ENCODE measurements at regions of chr2 and their contacts with region 1.

Region 1: GRCh38 chr2:222939208-222939856 is 78.5 kb downstream of the ACSL3 start:
- DNase-seq: peak; percentile 86 to 91
- H3K4me3 ChIP-seq: no peak overlapping the region
- H3K4me3 Mint-ChIP-seq: no peak overlapping the region
- H3K27ac Mint-ChIP-seq: no peak overlapping the region
- H3K4me1 ChIP-seq: peaks cover 23% of the 10 kb centered on the region
- H3K4me1 Mint-ChIP-seq: peaks cover 23% of the 10 kb centered on the region
- H3K27me3 ChIP-seq: no peaks in the 10 kb centered on the region
- H3K27me3 Mint-ChIP-seq: no peaks in the 10 kb centered on the region
- CTCF ChIP-seq: peak; percentile 97 to 98

Region 2: GRCh38 chr2:222903234-222904220 is 35.8 kb before region 1 on chr2:
- CTCF ChIA-PET with region 1: interaction called, 10 read pairs
- POLR2A ChIA-PET with region 1: no interaction called
- intact Hi-C with region 1: no loop called
- DNase-seq: peak; percentile 67 to 75
- H3K4me3 ChIP-seq: no peak overlapping the region
- H3K4me3 Mint-ChIP-seq: no peak overlapping the region
- H3K27ac Mint-ChIP-seq: no peak overlapping the region
- H3K4me1 ChIP-seq: peaks cover 44% of the 10 kb centered on the region
- H3K4me1 Mint-ChIP-seq: peaks cover 72% of the 10 kb centered on the region
- H3K27me3 ChIP-seq: no peaks in the 10 kb centered on the region
- H3K27me3 Mint-ChIP-seq: no peaks in the 10 kb centered on the region
- CTCF ChIP-seq: peak; percentile 86 to 87

Region 3: DNA sequence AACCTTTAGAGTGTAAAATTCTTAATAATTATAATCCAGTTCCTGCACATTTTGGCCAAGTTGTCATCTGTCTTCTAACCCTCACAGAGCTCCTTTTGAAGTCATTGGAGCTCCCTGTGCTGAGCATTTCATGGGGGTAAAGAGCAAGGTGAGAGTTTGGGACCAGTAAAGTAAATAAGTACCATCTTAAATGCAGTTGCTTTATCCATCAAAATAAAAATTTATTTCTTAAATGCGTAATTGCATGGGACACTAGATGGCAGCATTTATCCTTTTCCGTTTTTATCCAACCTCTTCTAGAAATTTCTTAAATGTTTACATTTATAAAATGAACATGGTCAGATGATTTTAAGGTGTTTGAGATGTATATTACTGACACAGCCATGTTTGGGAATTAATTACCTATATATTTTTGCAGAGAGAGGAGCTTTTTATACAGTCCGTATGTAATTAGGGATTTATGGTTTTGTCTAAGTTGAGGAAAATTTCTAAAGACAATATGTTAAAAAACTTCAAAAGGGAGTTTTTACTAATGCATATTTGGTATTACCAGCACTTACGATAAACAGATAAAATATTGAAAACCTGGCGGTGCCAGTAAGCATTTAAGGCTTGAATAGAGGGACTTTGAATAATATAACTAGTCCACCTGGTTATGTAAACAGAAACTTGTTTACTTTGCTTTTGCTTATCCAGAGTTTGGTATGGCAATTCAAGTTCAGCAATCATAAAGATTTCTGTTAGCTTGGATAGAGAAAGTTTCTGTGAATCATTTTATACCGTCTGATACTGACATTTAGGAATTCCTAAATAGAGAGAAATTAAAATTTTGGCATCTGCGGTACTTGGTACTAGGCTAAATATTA is 24.0 kb before region 1 on chr2:
- CTCF ChIA-PET with region 1: interaction called, 10 read pairs
- POLR2A ChIA-PET with region 1: no interaction called
- intact Hi-C with region 1: loop called (anchors 1 kb)
- DNase-seq: no peak
- H3K4me3 ChIP-seq: no peak overlapping the region
- H3K4me3 Mint-ChIP-seq: no peak overlapping the region
- H3K27ac Mint-ChIP-seq: no peak overlapping the region
- H3K4me1 ChIP-seq: peaks cover 27% of the 10 kb centered on the region
- H3K4me1 Mint-ChIP-seq: peaks cover 7% of the 10 kb centered on the region
- H3K27me3 ChIP-seq: no peaks in the 10 kb centered on the region
- H3K27me3 Mint-ChIP-seq: no peaks in the 10 kb centered on the region
- CTCF ChIP-seq: peak; percentile 40 to 67

Region 4: GRCh38 chr2:222927600-222927999 is 11.7 kb before region 1 on chr2:
- CTCF ChIA-PET with region 1: interaction called, 17 read pairs
- POLR2A ChIA-PET with region 1: no interaction called
- intact Hi-C with region 1: no loop called
- DNase-seq: no peak
- H3K4me3 ChIP-seq: no peak overlapping the region
- H3K4me3 Mint-ChIP-seq: no peak overlapping the region
- H3K27ac Mint-ChIP-seq: no peak overlapping the region
- H3K4me1 ChIP-seq: no peaks in the 10 kb centered on the region
- H3K4me1 Mint-ChIP-seq: no peaks in the 10 kb centered on the region
- H3K27me3 ChIP-seq: no peaks in the 10 kb centered on the region
- H3K27me3 Mint-ChIP-seq: no peaks in the 10 kb centered on the region
- CTCF ChIP-seq: no peak

Region 5: DNA sequence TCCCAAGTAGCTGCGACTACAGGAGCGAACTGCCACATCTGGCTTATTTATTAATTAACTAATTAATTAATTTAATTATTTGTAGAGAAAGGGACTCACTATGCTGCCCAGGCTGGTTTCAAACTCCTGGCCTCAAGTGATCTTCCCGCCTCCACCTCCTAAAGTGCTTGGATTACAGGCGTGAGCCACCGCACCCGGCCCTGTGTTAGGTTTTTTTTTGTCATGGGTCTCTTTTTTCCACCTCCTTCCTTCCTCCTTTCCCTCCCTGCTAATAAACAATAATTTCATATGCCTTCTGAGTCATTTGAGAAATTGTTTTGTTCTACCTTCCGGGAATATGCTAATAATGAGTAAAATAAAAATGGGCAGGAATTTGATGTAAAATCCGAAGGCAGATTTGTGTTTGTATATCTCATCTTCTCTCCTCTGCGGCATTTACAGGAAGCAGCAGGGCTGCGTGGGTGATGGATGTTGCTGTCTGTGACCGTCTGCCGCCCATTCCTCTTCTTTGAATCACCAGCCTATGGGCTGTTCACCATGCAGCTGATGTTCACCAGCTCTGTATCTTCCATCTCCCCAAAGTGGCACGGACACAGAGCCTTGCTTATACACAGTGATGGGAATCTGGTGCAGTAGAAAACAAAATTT is 11.4 kb after region 1 on chr2:
- CTCF ChIA-PET with region 1: interaction called, 10 read pairs
- POLR2A ChIA-PET with region 1: no interaction called
- intact Hi-C with region 1: no loop called
- DNase-seq: no peak
- H3K4me3 ChIP-seq: no peak overlapping the region
- H3K4me3 Mint-ChIP-seq: no peak overlapping the region
- H3K27ac Mint-ChIP-seq: no peak overlapping the region
- H3K4me1 ChIP-seq: no peaks in the 10 kb centered on the region
- H3K4me1 Mint-ChIP-seq: no peaks in the 10 kb centered on the region
- H3K27me3 ChIP-seq: no peaks in the 10 kb centered on the region
- H3K27me3 Mint-ChIP-seq: peaks cover 2% of the 10 kb centered on the region
- CTCF ChIP-seq: no peak

Region 6: DNA sequence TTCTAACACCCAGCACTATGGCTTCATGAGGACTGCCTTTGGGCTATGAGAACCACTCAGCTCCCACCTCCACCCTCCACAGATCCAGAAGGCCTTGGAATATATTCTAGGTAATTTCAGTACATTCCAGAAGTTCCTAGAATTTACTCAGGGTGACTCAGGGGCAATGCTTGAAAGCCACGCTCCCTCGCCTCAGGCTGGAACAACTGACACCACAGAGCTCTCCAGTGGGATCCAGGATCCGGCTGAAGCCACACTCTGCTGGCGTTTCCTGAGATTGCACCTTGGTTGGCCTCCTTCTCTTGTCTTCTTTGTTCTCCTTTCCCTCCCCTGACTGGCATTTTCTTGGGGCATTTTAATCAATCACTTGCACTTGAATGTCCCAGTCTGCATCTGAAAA is 20.0 kb after region 1 on chr2:
- CTCF ChIA-PET with region 1: interaction called, 24 read pairs
- POLR2A ChIA-PET with region 1: no interaction called
- intact Hi-C with region 1: no loop called
- DNase-seq: peak; percentile 81 to 90
- H3K4me3 ChIP-seq: no peak overlapping the region
- H3K4me3 Mint-ChIP-seq: no peak overlapping the region
- H3K27ac Mint-ChIP-seq: peak overlapping the region; percentile 49
- H3K4me1 ChIP-seq: peaks cover 25% of the 10 kb centered on the region
- H3K4me1 Mint-ChIP-seq: peaks cover 20% of the 10 kb centered on the region
- H3K27me3 ChIP-seq: no peaks in the 10 kb centered on the region
- H3K27me3 Mint-ChIP-seq: no peaks in the 10 kb centered on the region
- CTCF ChIP-seq: peak; percentile 38 to 44

Measured in Caco-2 (cell line).